ENCODE measurements at regions of chr14 and their contacts with region 1.

Region 1: GRCh38 chr14:63504619-63505276 is 38.4 kb downstream of the PPP2R5E start:
- DNase-seq: peak; percentile 72
- H3K4me3 Mint-ChIP-seq: no peak overlapping the region
- H3K27ac Mint-ChIP-seq: peak overlapping the region; percentile 42
- H3K4me1 Mint-ChIP-seq: peaks cover 13% of the 10 kb centered on the region
- H3K27me3 Mint-ChIP-seq: no peaks in the 10 kb centered on the region
- CTCF ChIP-seq: no peak

Region 2: DNA sequence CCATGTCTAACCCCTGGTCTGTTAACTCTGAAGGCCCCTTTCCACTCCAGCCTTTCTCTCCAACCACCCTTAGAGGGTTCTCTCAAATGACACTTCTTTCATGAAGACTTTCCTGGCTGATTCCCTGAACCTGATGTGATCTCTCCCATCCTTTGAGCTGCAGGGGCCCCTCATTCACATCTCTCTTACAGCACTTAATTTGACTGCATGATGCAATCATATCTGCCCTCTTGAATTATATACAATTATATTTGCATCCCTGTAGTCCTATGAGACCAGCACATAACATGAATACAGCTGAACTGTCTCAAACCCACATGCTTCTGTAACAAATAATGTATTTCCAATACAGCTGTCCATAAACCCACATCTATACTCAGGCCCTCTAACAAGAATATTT is 18.0 kb before region 1 on chr14:
- CTCF ChIA-PET with region 1: no interaction called
- POLR2A ChIA-PET with region 1: no interaction called
- intact Hi-C with region 1: loop called (anchors 2 kb)
- DNase-seq: no peak
- H3K4me3 Mint-ChIP-seq: no peak overlapping the region
- H3K27ac Mint-ChIP-seq: peak overlapping the region; percentile 8
- H3K4me1 Mint-ChIP-seq: peaks cover 13% of the 10 kb centered on the region
- H3K27me3 Mint-ChIP-seq: no peaks in the 10 kb centered on the region
- CTCF ChIP-seq: no peak

Region 3: DNA sequence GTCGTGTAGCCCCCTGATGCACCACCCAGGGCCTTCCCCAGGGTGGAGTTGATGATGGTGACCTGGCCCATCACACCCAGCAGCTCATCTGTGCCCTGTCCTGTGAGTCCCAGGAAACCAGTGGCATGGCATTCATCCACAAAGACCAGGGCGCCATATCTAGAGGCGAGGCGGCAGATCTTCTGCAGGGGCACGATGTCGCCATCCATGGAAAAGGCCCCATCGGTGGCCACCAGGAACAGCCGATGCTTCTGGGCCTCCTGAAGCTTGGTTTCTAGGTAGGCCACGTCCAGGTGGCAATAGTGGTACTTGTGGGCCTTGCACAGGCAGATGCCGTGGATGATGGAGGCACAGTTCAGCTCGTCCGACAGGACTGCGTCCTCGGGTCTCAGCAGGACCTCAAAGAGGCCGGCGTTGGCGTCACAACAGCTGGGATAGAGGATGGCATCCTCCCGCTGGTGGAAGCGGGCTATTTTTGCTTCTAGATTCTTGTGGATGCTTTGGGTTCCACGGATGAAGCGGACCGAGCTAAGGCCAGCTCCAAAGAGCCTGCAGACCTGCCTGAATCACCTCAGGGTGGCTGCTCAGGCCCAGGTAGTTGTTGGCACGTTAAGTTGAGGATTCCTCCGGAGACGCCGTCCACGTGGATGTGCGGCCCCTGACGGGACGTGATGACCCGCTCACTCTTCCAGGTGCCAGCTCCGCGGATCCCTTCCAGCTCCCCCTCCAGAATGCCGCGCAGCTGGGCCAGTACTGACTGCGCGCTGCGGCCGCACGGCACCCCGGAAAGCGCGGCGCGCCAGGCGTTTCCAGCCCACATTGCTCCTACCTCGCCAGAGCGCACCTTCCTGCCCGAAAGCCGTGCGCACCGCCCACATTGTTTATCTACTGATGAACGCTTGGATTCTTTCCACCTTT is 90.0 kb after region 1 on chr14:
- CTCF ChIA-PET with region 1: no interaction called
- POLR2A ChIA-PET with region 1: no interaction called
- intact Hi-C with region 1: no loop called
- DNase-seq: no peak
- H3K4me3 Mint-ChIP-seq: no peak overlapping the region
- H3K27ac Mint-ChIP-seq: no peak overlapping the region
- H3K4me1 Mint-ChIP-seq: no peaks in the 10 kb centered on the region
- H3K27me3 Mint-ChIP-seq: no peaks in the 10 kb centered on the region
- CTCF ChIP-seq: no peak

Region 4: DNA sequence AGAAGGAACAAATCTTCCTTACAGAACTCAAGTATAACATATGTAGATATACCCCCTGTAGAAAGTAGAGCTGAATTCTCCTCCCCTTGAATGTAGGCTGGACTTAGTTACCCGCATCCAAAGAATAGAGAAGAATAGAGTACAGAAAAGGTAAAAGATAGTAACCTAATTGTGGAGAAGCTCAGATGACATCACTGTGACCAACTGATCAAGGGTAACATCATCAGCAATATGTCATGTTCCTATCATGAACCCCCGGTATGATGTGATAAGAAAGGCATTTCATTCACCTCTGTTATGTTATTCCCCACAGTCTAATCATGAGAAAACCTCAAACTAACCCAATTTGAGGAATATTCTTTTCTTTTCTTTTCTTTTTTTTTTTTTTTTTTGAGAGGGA is 105.6 kb after region 1 on chr14:
- CTCF ChIA-PET with region 1: no interaction called
- POLR2A ChIA-PET with region 1: no interaction called
- intact Hi-C with region 1: no loop called
- DNase-seq: no peak
- H3K4me3 Mint-ChIP-seq: no peak overlapping the region
- H3K27ac Mint-ChIP-seq: no peak overlapping the region
- H3K4me1 Mint-ChIP-seq: no peaks in the 10 kb centered on the region
- H3K27me3 Mint-ChIP-seq: no peaks in the 10 kb centered on the region
- CTCF ChIP-seq: no peak